HEK293 (cell line): ENCODE measurements at regions of chr10 and their contacts with region 1.

Region 1: GRCh38 chr10:100009793-100010676 is at the start of gene DNMBP:
- H3K4me3 ChIP-seq: peak within 1 kb of the TSS; percentile 72
- H3K27ac ChIP-seq: peak within 1 kb of the TSS; percentile 66; the same call in 1 of the 2 replicates
- H3K4me1 ChIP-seq: peaks cover 16% of the 10 kb centered on the region
- CTCF ChIP-seq: no peak; the same call in 1 of the 2 replicates

Region 2: DNA sequence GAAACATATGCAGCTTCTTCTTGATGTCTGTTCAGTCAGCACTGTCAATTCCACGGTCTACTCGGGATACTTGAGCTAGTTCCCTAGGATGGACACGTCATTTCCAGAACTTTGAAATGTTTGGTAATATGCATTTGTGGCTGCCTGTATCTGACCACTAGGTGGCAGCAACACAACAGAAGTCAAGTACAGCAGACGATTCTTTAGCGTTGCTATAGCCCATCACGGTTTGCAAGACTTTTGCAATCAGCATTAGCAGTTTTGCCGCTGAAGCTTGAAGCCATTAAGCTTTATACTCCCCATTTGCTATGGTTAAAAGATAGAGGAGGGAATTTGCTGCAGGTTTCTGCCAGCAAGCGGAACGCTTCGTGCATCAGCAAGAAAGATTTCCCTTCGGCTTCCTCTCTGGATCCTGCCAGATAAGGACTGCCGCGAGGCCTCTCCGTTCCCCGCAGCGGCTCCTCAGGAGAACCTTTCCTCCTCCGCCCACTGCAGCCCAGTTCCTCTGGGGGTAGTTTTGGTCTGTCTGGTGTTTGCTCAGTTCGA is 164.1 kb before region 1 on chr10:
- CTCF ChIA-PET with region 1: interaction called, 13 read pairs
- POLR2A ChIA-PET with region 1: no interaction called
- H3K4me3 ChIP-seq: no peak overlapping the region
- H3K27ac ChIP-seq: no peak overlapping the region
- H3K4me1 ChIP-seq: no peaks in the 10 kb centered on the region
- CTCF ChIP-seq: peak; percentile 87; the same call in 1 of the 2 replicates

Region 3: GRCh38 chr10:99895867-99896266 is 114.2 kb before region 1 on chr10:
- CTCF ChIA-PET with region 1: no interaction called
- POLR2A ChIA-PET with region 1: no interaction called
- H3K4me3 ChIP-seq: no peak overlapping the region
- H3K27ac ChIP-seq: no peak overlapping the region
- H3K4me1 ChIP-seq: no peaks in the 10 kb centered on the region
- CTCF ChIP-seq: no peak

Region 4: DNA sequence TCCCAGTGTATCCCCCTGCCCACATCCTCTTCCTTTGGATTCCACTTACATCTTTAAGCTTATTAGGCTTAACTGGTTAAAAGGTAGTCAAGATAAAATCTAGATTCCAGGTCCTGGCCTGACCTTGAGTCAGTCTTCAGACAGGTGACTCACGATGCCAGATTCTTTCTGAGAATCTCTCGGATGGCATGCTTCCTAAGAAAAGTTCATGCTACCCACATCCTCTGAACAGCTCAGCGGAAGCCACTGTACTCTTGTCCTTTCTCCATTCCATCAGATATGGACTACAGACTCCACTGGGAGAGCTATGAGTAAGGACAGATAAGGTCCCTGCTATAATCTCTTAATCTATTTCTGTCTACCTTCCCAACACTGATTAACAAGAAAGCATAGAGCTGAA is 43.7 kb before region 1 on chr10:
- CTCF ChIA-PET with region 1: interaction called, 11 read pairs
- POLR2A ChIA-PET with region 1: no interaction called
- H3K4me3 ChIP-seq: no peak overlapping the region
- H3K27ac ChIP-seq: no peak overlapping the region
- H3K4me1 ChIP-seq: no peaks in the 10 kb centered on the region
- CTCF ChIP-seq: no peak

Region 5: DNA sequence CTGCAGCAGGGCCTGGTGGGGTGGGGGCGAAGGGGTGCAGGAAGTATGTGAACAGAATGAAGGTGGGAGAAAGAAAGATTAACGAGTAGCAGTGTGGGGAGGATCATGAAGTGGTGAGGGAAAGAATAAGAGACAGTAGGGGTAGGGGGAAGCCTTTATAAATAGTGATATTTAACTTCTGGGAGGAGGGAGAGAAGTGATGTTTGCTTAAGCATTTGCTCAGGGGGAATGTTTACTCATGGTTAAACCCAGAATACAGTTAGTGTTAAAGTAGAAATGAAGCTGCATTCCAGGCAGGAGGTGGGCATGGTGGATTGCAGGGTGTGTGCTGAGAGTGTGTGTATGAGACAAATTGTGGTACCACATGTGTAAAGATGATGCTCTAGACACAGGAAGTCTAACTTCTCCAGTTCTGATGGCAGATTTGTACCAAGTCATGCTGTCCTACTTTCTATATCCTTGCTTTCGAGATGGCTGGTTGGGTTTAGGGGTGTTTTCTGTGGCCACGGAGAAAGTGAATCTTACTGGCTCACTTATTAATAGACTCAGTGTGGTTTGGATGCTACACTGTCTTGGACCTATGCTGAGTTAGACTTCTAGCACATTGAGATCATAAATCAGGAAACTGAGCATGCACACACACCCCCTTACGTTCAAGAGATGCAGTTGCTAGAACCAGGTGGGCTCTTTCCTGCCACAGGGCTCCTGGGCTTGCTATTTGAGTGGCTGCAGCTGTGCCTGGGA is 10.3 kb after region 1 on chr10:
- CTCF ChIA-PET with region 1: interaction called, 18 read pairs
- POLR2A ChIA-PET with region 1: no interaction called
- H3K4me3 ChIP-seq: no peak overlapping the region
- H3K27ac ChIP-seq: no peak overlapping the region
- H3K4me1 ChIP-seq: peaks cover 4% of the 10 kb centered on the region; the same call in 1 of the 2 replicates
- CTCF ChIP-seq: no peak; the same call in 1 of the 2 replicates

Region 6: DNA sequence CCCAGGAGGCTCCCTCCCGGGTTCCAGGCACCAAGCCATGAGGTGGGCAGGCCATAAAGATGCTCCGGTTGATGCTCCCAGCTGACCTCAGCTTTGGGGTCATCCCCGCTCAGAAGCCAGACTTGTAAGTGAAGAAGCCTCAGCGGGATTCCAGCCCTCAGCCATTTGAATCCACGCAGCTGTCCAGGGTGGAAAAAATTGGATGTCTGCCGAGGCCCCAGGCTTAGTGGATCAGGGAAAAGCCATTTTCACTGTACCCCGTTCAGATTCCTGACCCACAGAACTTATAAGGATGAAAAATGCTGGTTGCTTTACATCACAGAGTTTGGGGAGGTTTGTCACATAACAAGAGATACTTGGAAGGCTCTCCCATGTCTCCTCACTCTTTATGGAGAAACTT is 120.8 kb after region 1 on chr10:
- CTCF ChIA-PET with region 1: no interaction called
- POLR2A ChIA-PET with region 1: no interaction called
- H3K4me3 ChIP-seq: no peak overlapping the region
- H3K27ac ChIP-seq: no peak overlapping the region
- H3K4me1 ChIP-seq: no peaks in the 10 kb centered on the region
- CTCF ChIP-seq: no peak

Region 7: DNA sequence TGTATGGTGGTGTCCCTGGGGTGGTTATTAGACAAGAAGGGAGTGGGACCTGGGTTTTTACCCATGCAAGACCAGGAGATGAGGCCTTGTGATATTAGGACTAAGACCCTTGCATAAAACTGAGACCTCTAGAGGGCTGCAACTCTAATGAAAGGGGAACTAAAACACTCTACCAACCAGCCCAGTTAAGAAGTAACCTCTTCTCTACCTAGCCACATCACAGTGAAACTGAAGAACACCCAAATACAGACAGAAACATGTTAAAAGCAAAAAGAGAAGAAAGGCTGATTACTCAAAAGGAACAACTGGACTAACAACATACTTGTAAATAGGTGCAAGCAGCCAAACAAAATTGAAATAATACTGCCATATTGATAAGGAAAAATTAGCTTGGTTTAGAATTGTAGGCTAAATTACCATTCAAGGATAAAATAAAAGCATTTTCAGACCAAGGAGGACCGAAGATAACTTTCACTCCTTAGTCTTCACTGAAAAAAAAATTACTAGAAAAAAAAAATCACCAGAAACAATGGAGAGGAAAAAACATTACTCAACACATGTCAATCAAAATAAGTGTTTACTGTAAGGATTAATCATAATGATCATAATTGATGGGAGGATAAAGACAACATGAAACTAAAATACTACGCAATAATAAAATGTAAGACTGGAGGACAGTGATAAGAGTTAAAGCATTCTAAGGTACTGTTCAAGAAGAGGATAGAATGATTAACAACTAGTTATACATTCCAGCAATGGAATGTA is 148.2 kb after region 1 on chr10:
- CTCF ChIA-PET with region 1: no interaction called
- POLR2A ChIA-PET with region 1: no interaction called
- H3K4me3 ChIP-seq: no peak overlapping the region
- H3K27ac ChIP-seq: no peak overlapping the region
- H3K4me1 ChIP-seq: no peaks in the 10 kb centered on the region
- CTCF ChIP-seq: no peak